ENCODE measurements at regions of chr3 and their contacts with region 1.

Region 1: GRCh38 chr3:142180761-142181362 is 31.5 kb upstream of the TFDP2 start:
- DNase-seq: peak; percentile 34 to 67 (median 65)
- H3K4me3 ChIP-seq: no peak overlapping the region
- H3K27ac ChIP-seq: no peak overlapping the region
- H3K4me1 ChIP-seq: no peaks in the 10 kb centered on the region
- H3K27me3 ChIP-seq: no peaks in the 10 kb centered on the region

Region 2: DNA sequence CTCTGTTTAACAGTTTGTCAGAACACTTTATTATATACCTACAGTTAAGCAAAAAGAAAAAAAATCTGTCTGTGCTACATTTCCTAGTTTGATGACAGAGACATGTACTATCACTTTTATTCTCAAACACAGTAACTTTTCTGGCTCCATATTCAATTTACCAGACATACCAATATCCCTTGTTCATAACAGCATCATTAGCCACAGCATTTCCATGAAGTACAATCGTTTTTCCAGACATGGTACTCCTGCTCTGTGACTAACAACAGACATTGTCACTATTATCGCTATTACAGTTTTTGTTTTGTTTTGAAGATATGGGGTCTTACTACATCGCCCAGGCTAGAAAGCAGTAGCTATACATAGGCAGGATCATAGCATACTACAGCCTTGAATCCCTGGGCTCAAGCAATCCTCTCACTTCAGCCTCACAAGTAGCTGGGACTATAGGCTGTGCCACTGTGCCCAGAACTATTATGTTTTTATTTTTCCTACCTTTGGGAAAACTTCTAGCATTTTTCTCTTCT is 46.0 kb before region 1 on chr3:
- CTCF ChIA-PET with region 1: no interaction called
- POLR2A ChIA-PET with region 1: no interaction called
- DNase-seq: no peak
- H3K4me3 ChIP-seq: no peak overlapping the region
- H3K27ac ChIP-seq: no peak overlapping the region
- H3K4me1 ChIP-seq: no peaks in the 10 kb centered on the region
- H3K27me3 ChIP-seq: no peaks in the 10 kb centered on the region

Region 3: DNA sequence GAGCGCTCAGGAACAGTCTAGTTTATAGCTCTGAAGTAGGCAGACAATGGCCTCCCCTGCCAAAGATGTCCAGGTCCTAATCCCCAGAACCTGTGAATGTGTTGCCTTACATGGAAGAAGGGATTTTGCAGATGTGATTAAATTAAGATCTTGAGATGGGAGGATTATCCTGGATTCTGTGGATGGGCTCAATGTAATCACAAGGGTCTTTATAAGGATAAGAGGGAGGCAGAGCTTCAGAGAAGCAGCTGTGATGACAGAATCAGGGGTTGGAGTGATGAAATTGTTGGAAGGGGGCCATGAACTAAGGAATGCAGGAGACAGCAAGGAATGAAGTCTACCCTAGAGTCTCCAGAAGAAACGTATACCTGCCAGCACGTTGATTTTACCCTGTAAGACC is 58.6 kb after region 1 on chr3:
- CTCF ChIA-PET with region 1: no interaction called
- POLR2A ChIA-PET with region 1: no interaction called
- DNase-seq: no peak
- H3K4me3 ChIP-seq: no peak overlapping the region
- H3K27ac ChIP-seq: no peak overlapping the region
- H3K4me1 ChIP-seq: no peaks in the 10 kb centered on the region
- H3K27me3 ChIP-seq: no peaks in the 10 kb centered on the region

Region 4: GRCh38 chr3:142279965-142280590 is 99.2 kb after region 1 on chr3:
- CTCF ChIA-PET with region 1: interaction called, 32 read pairs
- POLR2A ChIA-PET with region 1: no interaction called
- DNase-seq: peak; percentile 68 to 82 (median 78)
- H3K4me3 ChIP-seq: no peak overlapping the region
- H3K27ac ChIP-seq: no peak overlapping the region
- H3K4me1 ChIP-seq: peaks cover 0 to 18% (median 10%) of the 10 kb centered on the region in 4 experiments
- H3K27me3 ChIP-seq: no peaks in the 10 kb centered on the region

Measured in common myeloid progenitor, CD34-positive (primary cell).